ENCODE measurements at regions of chr3 and their contacts with region 1.

Region 1: DNA sequence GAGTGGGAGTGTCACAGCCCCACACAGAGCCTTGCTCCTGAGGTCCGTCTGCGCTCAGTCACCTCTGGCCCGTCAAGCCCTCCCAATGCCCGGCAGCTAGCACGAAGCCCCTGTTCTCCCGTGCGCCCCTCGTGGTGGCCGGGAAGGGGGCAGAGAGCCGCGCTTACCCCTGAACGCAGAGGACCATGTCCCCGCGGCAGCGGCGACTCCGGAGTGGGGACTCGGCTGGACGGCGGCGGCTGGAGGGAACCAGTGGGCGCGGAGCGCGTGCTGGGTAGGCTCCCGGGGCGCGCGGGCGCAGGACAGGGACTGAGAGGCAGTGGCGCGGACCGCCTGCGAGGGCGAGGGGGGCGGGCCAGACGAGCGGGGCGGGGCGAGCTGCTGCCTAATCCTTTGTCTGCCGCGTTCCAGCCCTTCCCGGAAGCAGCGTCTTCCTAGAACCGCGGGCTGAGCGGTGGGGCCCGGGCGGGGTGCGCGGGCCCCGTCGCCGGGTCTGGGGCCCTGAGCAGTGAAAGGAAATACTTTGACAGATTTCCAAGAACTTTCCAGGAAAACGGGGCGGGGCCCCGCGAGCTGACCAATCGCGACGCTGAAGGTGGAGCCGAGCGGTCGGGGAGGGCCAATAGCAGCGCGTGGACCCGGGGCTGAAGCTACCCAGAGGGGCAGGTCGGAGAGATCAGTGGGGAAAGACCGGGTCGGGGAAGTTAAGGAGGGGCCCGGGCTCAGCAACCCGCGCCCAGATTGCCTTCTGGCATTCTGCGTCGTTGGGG is at the start of gene CISH:
- DNase-seq: peak; percentile 80 to 91
- H3K4me3 ChIP-seq: peak within 1 kb of the TSS; percentile 65
- H3K27ac ChIP-seq: no peak within 1 kb of the TSS
- H3K4me1 ChIP-seq: peaks cover 18% of the 10 kb centered on the region
- H3K27me3 ChIP-seq: no peaks in the 10 kb centered on the region
- CTCF ChIP-seq: no peak; the same call in 1 of the 2 replicates
- total RNA-seq, gene CISH: 2.7 and 3.2 TPM in 2 replicates

Region 2: GRCh38 chr3:50192689-50193141 is 418.9 kb before region 1 on chr3:
- CTCF ChIA-PET with region 1: interaction called, 3 read pairs
- POLR2A ChIA-PET with region 1: no interaction called
- intact Hi-C with region 1: loop called (anchors 2 kb)
- DNase-seq: peak; percentile 47 to 78
- H3K4me3 ChIP-seq: no peak overlapping the region
- H3K27ac ChIP-seq: no peak overlapping the region
- H3K4me1 ChIP-seq: 0 out of 2 replicates have a peak, but pooled peaks cover 7% of the 10 kb centered on the region
- H3K27me3 ChIP-seq: no peaks in the 10 kb centered on the region
- CTCF ChIP-seq: peak; percentile 91

Region 3: GRCh38 chr3:50525987-50526386 is 85.7 kb before region 1 on chr3:
- CTCF ChIA-PET with region 1: no interaction called
- POLR2A ChIA-PET with region 1: no interaction called
- intact Hi-C with region 1: no loop called
- DNase-seq: peak in 1 of 2 experiments; percentile 46
- H3K4me3 ChIP-seq: no peak overlapping the region
- H3K27ac ChIP-seq: no peak overlapping the region
- H3K4me1 ChIP-seq: no peaks in the 10 kb centered on the region
- H3K27me3 ChIP-seq: peaks cover 41% of the 10 kb centered on the region
- CTCF ChIP-seq: no peak

Region 4: GRCh38 chr3:50550079-50550741 is 61.4 kb before region 1 on chr3:
- CTCF ChIA-PET with region 1: interaction called, 3 read pairs
- POLR2A ChIA-PET with region 1: no interaction called
- intact Hi-C with region 1: loop called (anchors 1 kb)
- DNase-seq: peak in 1 of 2 experiments; percentile 63
- H3K4me3 ChIP-seq: no peak overlapping the region
- H3K27ac ChIP-seq: no peak overlapping the region
- H3K4me1 ChIP-seq: no peaks in the 10 kb centered on the region
- H3K27me3 ChIP-seq: no peaks in the 10 kb centered on the region
- CTCF ChIP-seq: peak; percentile 72

Region 5: DNA sequence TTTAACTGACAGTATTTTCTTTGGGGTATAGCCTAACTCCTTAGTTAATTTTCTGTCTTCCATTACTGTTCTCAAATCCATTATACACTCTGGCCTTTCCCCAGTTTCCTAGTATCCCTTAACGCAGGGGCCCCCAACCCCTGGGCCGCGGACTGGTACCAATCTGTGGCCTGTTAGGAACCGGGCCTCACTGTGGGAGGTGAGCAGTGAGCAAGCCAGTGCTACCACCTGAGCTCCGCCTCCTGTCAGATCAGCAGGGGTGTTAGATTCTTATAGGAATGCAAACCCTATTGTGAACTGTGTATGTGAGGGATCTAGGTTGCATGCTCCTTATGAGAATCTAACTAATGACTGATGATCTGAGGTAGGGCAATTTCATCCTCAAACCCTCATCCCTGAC is 138.2 kb after region 1 on chr3:
- CTCF ChIA-PET with region 1: no interaction called
- POLR2A ChIA-PET with region 1: no interaction called
- intact Hi-C with region 1: no loop called
- DNase-seq: no peak
- H3K4me3 ChIP-seq: no peak overlapping the region
- H3K27ac ChIP-seq: no peak overlapping the region
- H3K4me1 ChIP-seq: no peaks in the 10 kb centered on the region
- H3K27me3 ChIP-seq: no peaks in the 10 kb centered on the region
- CTCF ChIP-seq: no peak

Region 6: GRCh38 chr3:50807266-50807665 is 195.6 kb after region 1 on chr3:
- CTCF ChIA-PET with region 1: no interaction called
- POLR2A ChIA-PET with region 1: no interaction called
- intact Hi-C with region 1: loop called (anchors 5 kb)
- DNase-seq: peak; percentile 82 to 86
- H3K4me3 ChIP-seq: peak overlapping the region; percentile 37; the same call in 1 of the 2 replicates
- H3K27ac ChIP-seq: peak overlapping the region; percentile 96
- H3K4me1 ChIP-seq: peaks cover 44% of the 10 kb centered on the region
- H3K27me3 ChIP-seq: no peaks in the 10 kb centered on the region
- CTCF ChIP-seq: no peak

Region 7: GRCh38 chr3:51371943-51372557 is 760.4 kb after region 1 on chr3:
- CTCF ChIA-PET with region 1: interaction called, 8 read pairs
- POLR2A ChIA-PET with region 1: no interaction called
- intact Hi-C with region 1: loop called (anchors 1 kb)
- DNase-seq: peak; percentile 37 to 50
- H3K4me3 ChIP-seq: no peak overlapping the region
- H3K27ac ChIP-seq: no peak overlapping the region
- H3K4me1 ChIP-seq: no peaks in the 10 kb centered on the region
- H3K27me3 ChIP-seq: no peaks in the 10 kb centered on the region
- CTCF ChIP-seq: peak; percentile 82

Region 8: GRCh38 chr3:51682079-51682478 is 1070.4 kb after region 1 on chr3:
- CTCF ChIA-PET with region 1: interaction called, 3 read pairs
- POLR2A ChIA-PET with region 1: no interaction called
- intact Hi-C with region 1: loop called (anchors 2 kb)
- DNase-seq: peak; percentile 67 to 69
- H3K4me3 ChIP-seq: no peak overlapping the region
- H3K27ac ChIP-seq: no peak overlapping the region
- H3K4me1 ChIP-seq: no peaks in the 10 kb centered on the region
- H3K27me3 ChIP-seq: no peaks in the 10 kb centered on the region
- CTCF ChIP-seq: peak; percentile 85